ENCODE measurements at regions of chr10 and their contacts with region 1.

Region 1: DNA sequence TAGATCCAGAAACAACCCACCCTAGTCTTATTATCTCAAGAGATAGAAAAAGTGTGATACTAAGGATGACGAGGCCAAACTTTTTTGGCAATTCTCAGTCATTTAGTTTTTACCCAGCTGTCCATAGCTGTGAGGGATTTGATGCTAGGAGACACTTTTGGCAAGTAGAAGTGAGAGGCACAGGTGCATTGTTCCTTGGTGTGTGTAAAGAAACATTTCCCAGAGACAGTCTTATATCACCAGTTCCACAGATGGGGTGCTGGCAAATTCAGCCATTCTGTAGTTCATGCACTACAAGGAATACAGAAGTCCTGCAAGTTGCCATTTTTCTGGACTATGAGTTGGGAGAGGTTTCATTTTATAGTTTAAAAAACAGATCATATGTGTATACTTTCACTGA is 403.3 kb upstream of the GHITM start:
- DNase-seq: no peak
- H3K4me3 ChIP-seq: no peak overlapping the region
- H3K27ac ChIP-seq: no peak overlapping the region
- H3K4me1 ChIP-seq: no peaks in the 10 kb centered on the region
- H3K27me3 ChIP-seq: no peaks in the 10 kb centered on the region
- CTCF ChIP-seq: no peak
- EP300 ChIP-seq: no peak
- POLR2A ChIP-seq: no peak

Region 2: GRCh38 chr10:82091413-82091812 is 1644.6 kb before region 1 on chr10:
- intact Hi-C with region 1: loop called in 1 of 4 experiments (anchors 10 kb)
- DNase-seq: no peak
- H3K4me3 ChIP-seq: no peak overlapping the region
- H3K27ac ChIP-seq: no peak overlapping the region
- H3K4me1 ChIP-seq: no peaks in the 10 kb centered on the region
- H3K27me3 ChIP-seq: no peaks in the 10 kb centered on the region
- CTCF ChIP-seq: no peak
- EP300 ChIP-seq: no peak
- POLR2A ChIP-seq: no peak